Activated B cell treated with CpG ODN at 0.5 μM for 24 hours (primary cell): ENCODE measurements at regions of chr9 and their contacts with region 1.

Region 1: DNA sequence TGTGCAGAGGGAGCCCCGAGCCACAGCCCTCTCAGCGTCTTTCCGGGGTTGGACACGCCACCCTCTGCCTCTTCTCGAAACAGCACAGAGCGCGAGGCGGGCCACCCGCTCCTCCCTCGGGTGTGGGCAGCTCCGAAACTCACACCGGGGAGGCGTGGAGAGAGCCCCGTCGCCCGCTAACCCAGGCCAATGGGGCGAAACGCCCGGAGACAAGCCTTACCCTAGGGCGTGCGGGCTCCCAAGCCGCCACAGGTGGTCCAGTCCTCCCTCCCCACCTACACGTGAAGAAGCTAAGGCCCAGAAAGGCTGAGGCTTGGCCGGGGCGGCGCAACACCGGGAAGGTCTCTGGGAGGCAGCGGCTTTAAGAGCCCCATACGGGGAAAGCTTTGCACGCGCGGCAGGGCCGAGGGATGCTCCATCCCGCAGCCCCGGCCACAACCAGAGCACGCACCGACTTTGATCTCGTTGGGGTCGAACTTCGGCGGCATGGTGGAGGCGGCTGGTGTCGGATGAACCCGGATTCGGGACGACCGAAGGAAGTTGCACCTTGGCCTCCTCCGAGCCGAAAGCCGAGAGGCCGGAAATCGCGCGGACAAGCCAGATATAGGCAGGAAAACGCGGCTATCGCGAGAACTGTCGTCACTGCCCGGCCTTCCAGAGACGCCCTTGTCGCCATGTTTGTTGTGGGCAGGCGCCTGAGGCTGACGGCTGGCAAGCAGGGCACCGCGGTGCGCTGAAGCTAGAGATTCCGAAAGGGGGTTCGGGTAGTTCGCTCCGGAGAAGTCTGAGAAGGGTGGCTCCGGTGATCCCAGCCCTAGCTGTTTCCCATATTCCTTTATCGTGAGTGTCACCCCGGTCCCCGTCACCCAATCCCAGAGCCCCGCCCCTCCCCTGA is at the starts of genes LRSAM1 and RPL12:
- DNase-seq: peak; percentile 99
- ATAC-seq: peak; percentile 66
- H3K4me3 Mint-ChIP-seq: peak within 1 kb of the TSS; percentile 96
- H3K27ac Mint-ChIP-seq: peak within 1 kb of the TSS; percentile 96
- H3K4me1 Mint-ChIP-seq: peaks cover 68% of the 10 kb centered on the region
- H3K27me3 Mint-ChIP-seq: no peaks in the 10 kb centered on the region
- CTCF ChIP-seq: no peak
- total RNA-seq, gene LRSAM1: 19.4 and 23.9 TPM in 2 replicates
- total RNA-seq, gene RPL12: 2,278 and 2,307 TPM in 2 replicates

Region 2: GRCh38 chr9:127224178-127224882 is 226.7 kb before region 1 on chr9:
- CTCF ChIA-PET with region 1: interaction called, 3 read pairs
- POLR2A ChIA-PET with region 1: interaction called, 24 read pairs
- intact Hi-C with region 1: loop called (anchors 2 kb)
- DNase-seq: peak; percentile 94
- ATAC-seq: peak; percentile 79
- H3K4me3 Mint-ChIP-seq: peak overlapping the region; percentile 85
- H3K27ac Mint-ChIP-seq: peak overlapping the region; percentile 73
- H3K4me1 Mint-ChIP-seq: peaks cover 41% of the 10 kb centered on the region
- H3K27me3 Mint-ChIP-seq: peaks cover 3% of the 10 kb centered on the region
- CTCF ChIP-seq: no peak

Region 3: GRCh38 chr9:127384901-127385300 is 66.2 kb before region 1 on chr9:
- CTCF ChIA-PET with region 1: no interaction called
- POLR2A ChIA-PET with region 1: no interaction called
- intact Hi-C with region 1: no loop called
- DNase-seq: no peak
- ATAC-seq: no peak
- H3K4me3 Mint-ChIP-seq: no peak overlapping the region
- H3K27ac Mint-ChIP-seq: no peak overlapping the region
- H3K4me1 Mint-ChIP-seq: peaks cover 9% of the 10 kb centered on the region
- H3K27me3 Mint-ChIP-seq: peaks cover 10% of the 10 kb centered on the region
- CTCF ChIP-seq: no peak

Region 4: DNA sequence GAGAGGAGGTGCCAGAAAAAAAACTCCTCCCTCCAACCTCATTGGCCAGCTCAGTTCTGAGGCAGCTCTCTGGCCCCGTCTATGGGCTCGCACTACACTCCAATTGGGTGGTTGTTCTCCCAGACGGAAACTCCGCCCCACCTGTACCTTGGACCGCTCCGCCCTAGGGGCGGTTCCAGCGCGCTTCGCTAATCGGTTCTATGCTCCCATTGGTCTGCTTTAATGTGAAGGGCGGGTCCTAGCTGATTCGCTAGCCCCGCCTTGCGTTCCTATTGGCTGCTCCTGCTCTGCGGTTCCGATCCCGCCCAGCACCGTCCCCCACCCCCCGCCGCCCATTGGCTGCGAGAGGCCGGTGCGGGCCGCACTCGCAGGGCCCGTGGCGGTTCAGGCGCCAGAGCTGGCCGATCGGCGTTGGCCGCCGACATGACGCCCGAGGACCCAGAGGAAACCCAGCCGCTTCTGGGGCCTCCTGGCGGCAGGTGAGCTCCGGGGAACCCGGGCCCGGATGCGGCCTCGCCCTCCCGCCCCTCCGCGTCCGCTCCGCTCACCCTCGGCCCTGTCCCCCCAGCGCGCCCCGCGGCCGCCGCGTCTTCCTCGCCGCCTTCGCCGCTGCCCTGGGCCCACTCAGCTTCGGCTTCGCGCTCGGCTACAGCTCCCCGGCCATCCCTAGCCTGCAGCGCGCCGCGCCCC is 54.1 kb before region 1 on chr9 and contains the start of gene SLC2A8:
- CTCF ChIA-PET with region 1: interaction called, 3 read pairs
- POLR2A ChIA-PET with region 1: interaction called, 44 read pairs
- intact Hi-C with region 1: loop called (anchors 1 kb)
- DNase-seq: peak; percentile 93
- ATAC-seq: peak; percentile 94
- H3K4me3 Mint-ChIP-seq: peak within 1 kb of the TSS; percentile 83
- H3K27ac Mint-ChIP-seq: peak within 1 kb of the TSS; percentile 35
- H3K4me1 Mint-ChIP-seq: peaks cover 10% of the 10 kb centered on the region
- H3K27me3 Mint-ChIP-seq: no peaks in the 10 kb centered on the region
- CTCF ChIP-seq: no peak
- total RNA-seq, gene SLC2A8: 13.4 and 17.1 TPM in 2 replicates

Region 5: DNA sequence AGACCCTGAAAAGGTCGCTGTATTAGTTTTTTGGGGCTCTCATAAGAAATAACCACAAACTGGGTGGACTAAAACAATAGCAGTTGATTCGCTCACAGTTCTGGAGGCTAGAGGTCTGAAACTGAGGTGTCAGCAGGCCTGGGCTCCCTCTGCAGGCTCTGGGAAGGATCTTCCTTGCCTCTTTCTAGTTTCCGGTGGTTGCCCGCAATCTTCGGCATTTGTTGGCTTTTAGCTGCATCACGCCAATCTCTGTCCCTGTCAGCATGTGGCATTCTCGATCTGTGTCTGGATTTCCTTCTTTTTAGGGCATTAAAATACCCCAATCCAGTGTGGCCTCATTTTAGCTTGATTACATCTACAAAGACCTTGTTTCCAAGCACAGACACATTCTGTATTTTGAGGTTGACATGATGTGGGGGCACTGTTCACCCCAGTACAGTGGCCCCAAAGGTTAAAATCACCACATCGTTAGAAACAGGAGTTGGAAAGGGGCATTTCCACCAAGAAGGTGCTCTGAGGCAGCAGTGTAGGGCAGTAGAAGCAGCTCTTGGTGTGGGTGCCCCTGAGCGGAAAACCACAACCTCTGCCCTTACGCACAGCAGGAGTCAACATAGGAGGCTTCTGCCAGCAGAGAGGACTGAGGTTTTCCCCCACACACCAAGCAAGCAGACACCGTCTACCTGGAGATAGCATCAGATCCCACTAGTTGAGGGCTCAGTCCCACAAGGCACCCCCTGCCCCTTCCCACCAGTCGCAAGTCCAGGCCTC is 13.4 kb before region 1 on chr9:
- CTCF ChIA-PET with region 1: interaction called, 3 read pairs
- POLR2A ChIA-PET with region 1: interaction called, 13 read pairs
- intact Hi-C with region 1: no loop called
- DNase-seq: no peak
- ATAC-seq: no peak
- H3K4me3 Mint-ChIP-seq: no peak overlapping the region
- H3K27ac Mint-ChIP-seq: no peak overlapping the region
- H3K4me1 Mint-ChIP-seq: no peaks in the 10 kb centered on the region
- H3K27me3 Mint-ChIP-seq: no peaks in the 10 kb centered on the region
- CTCF ChIP-seq: no peak

Region 6: DNA sequence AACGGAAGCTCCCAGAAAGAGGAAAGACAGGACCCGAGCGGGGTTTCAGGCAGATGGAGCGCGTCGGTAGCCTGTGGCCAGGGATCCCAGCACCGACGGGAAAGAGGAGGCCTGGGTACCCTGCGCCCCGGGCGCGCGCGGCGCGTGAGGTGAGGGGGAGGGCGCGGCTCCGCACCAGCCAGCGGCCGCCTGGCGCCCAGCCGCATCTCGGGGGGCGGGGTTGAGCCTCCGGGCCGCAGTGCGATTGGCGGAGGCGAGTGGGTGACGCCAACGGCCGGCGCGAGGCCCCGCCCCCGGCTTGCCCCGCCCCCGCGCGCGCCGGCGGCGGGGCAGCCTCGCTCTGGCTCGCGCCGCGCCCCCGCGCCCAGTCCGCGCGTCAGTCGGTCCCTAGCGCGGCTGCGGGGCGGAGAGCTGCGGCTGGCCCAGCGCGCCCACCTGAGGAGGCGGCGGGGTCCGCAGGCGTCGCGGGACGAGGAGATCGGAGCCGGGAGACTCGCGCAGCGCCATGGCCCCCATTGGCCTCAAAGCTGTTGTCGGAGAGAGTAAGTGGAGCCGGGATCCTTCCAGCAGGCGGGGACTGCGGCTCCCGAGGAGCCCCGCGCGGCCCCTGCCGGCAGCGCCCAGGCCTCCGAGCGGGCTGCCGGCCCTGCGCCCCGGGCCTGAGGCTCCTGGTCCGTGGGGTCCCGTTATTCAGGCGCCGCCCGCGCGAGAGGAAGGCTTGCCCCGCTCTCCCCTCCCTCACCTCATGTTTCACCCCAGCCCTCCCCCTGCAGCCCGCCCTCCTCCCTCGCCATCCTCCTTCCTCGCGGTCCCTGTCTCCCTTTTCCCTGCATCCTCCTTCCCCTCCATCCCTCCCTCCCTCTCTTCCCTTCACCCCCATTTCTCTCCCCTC is 161.1 kb after region 1 on chr9 and contains the start of gene STXBP1:
- CTCF ChIA-PET with region 1: no interaction called
- POLR2A ChIA-PET with region 1: interaction called, 6 read pairs
- intact Hi-C with region 1: loop called (anchors 2 kb)
- DNase-seq: peak; percentile 88
- ATAC-seq: peak; percentile 92
- H3K4me3 Mint-ChIP-seq: peak within 1 kb of the TSS; percentile 90
- H3K27ac Mint-ChIP-seq: peak within 1 kb of the TSS; percentile 56
- H3K4me1 Mint-ChIP-seq: peaks cover 25% of the 10 kb centered on the region
- H3K27me3 Mint-ChIP-seq: peaks cover 37% of the 10 kb centered on the region
- CTCF ChIP-seq: no peak
- total RNA-seq, gene STXBP1: 0.20 and 0.73 TPM in 2 replicates

Region 7: GRCh38 chr9:127779136-127779981 is 328.3 kb after region 1 on chr9:
- CTCF ChIA-PET with region 1: no interaction called
- POLR2A ChIA-PET with region 1: interaction called, 19 read pairs
- intact Hi-C with region 1: loop called (anchors 2 kb)
- DNase-seq: peak; percentile 63
- ATAC-seq: peak; percentile 61
- H3K4me3 Mint-ChIP-seq: peak overlapping the region; percentile 94
- H3K27ac Mint-ChIP-seq: peak overlapping the region; percentile 98
- H3K4me1 Mint-ChIP-seq: peaks cover 70% of the 10 kb centered on the region
- H3K27me3 Mint-ChIP-seq: no peaks in the 10 kb centered on the region
- CTCF ChIP-seq: no peak